ENCODE measurements at regions of chr1 and their contacts with region 1.

Region 1: GRCh38 chr1:204072931-204073836 is at the start of gene SOX13:
- DNase-seq: peak; percentile 92 to 95
- H3K4me3 ChIP-seq: peak within 1 kb of the TSS; percentile 77 to 87
- H3K27ac ChIP-seq: peak within 1 kb of the TSS; percentile 89 to 90
- H3K4me1 ChIP-seq: peaks cover 0 to 40% (median 32%) of the 10 kb centered on the region in 4 donors
- H3K27me3 ChIP-seq: no peaks in the 10 kb centered on the region
- CTCF ChIP-seq: peak; percentile 10 to 27

Region 2: DNA sequence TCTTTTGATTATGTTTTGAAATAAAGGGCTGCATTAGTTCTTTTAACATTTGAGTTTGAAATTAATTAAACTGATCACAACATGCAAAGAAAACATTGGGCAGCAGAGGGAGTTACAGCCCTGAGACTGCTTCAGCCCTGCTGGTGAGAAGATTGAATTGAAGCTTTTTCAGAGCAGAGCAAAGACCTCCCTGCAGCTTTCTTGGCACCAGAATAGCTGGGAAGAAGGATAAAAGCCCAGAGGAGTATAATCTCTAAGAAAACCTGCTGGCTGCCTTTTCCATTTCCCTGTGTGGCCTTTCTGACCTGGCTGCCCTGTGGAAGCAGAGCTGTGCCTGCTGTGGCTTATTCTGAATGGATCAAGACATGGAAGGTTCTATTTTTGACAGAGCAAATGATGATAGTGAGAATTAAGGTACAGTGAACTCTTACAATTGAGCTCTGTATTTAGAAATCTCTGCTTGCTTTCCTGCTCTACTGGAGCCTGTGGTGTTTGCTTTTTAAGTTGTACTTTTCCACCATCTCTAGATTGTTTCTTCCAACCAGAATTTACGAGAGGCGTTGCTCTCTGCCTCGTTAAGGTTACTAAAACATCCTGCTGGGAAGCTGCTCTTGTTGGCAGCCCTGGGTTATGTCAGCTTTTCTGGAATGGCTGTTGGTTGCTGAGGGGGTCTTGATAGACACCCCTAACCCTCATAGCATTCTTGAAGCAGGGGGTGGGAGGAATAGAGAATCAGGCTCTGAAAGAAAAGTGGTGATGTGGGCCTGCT is 201.9 kb before region 1 on chr1:
- intact Hi-C with region 1: loop called (anchors 5 kb)
- DNase-seq: no peak
- H3K4me3 ChIP-seq: no peak overlapping the region
- H3K27ac ChIP-seq: peak overlapping the region in 1 of 2 donors; percentile 37
- H3K4me1 ChIP-seq: no peaks in the 10 kb centered on the region
- H3K27me3 ChIP-seq: no peaks in the 10 kb centered on the region
- CTCF ChIP-seq: peak; percentile 85 to 99

Region 3: DNA sequence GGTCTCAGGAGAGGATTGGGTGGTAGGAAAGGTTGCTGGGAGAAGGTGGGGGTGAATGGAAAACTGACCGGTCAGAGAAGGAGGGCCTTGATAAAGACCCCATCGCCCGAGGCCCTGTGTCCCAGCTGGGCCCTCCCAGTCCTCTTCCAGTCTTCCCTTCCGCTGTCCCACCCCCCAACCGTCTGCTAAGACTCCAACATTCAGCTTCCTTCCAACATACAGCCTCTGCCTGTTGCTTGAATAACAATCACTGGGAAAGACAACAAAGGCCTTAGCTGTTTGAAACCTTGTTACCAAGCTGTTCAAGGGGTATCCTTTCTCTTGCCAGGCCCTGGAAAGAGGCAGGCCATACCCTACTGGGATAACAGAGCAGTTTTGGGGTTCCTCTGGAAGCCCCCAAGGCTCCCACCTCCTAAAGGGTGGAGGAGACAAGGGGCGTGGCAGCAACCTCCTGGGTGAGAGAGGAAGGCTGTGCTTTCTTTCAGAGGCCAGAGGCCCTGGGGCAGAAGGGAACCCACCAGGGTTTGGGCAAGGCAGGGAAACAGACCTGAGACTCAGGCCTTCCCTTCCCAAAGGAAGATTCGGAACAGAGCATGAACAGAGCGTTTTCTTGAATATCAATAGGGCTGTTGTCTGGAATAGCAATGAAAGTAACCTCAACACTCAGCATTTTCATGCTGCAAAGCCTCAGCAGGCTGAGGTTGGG is 74.4 kb after region 1 on chr1:
- intact Hi-C with region 1: no loop called
- DNase-seq: no peak
- H3K4me3 ChIP-seq: no peak overlapping the region
- H3K27ac ChIP-seq: no peak overlapping the region
- H3K4me1 ChIP-seq: peaks cover 4 to 38% (median 16%) of the 10 kb centered on the region in 4 donors
- H3K27me3 ChIP-seq: no peaks in the 10 kb centered on the region
- CTCF ChIP-seq: no peak